Activated CD4-positive, alpha-beta T cell treated with anti-CD3 and anti-CD28 coated beads for 36 hours (primary cell): ENCODE measurements at regions of chr3 and their contacts with region 1.

Region 1: GRCh38 chr3:58090351-58090750 is 82.1 kb downstream of the FLNB start:
- DNase-seq: no peak
- ATAC-seq: no peak
- H3K4me3 Mint-ChIP-seq: no peak overlapping the region
- H3K27ac Mint-ChIP-seq: no peak overlapping the region
- H3K4me1 Mint-ChIP-seq: peaks cover 12% of the 10 kb centered on the region
- H3K27me3 Mint-ChIP-seq: no peaks in the 10 kb centered on the region

Region 2: DNA sequence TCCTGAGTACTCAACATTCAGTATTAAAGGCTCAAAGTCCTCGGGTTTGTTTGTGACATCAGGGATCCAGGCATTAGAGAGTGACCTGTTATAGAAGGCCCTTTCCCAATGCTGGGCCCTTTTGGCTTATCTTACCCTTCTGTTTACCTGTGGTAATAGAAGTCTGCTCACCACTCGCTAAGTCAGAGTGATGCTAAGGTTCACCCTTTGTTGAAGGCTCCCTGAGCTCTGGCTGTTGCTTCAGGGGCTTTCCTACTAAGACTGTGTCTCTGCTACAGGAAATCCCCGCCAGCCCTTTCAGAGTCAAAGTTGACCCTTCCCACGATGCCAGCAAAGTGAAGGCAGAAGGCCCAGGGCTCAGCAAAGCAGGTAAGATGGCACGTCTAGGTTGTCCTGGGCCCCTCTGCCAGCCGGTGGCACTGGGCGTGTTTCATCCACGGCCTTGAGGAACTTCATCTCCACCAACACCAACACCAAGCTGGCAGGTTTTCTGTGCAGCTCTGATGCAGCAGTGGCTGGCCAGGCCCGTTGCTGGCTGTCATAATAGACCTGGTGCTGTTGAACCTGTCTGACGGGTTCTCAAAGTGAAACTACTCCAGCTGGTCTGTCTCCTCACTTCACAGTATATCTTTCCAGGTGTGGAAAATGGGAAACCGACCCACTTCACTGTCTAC is 21.3 kb after region 1 on chr3:
- CTCF ChIA-PET with region 1: no interaction called
- POLR2A ChIA-PET with region 1: no interaction called
- intact Hi-C with region 1: loop called in 1 of 2 experiments (anchors 2 kb)
- DNase-seq: no peak
- ATAC-seq: no peak
- H3K4me3 Mint-ChIP-seq: no peak overlapping the region
- H3K27ac Mint-ChIP-seq: no peak overlapping the region
- H3K4me1 Mint-ChIP-seq: peaks cover 22% of the 10 kb centered on the region
- H3K27me3 Mint-ChIP-seq: no peaks in the 10 kb centered on the region

Region 3: DNA sequence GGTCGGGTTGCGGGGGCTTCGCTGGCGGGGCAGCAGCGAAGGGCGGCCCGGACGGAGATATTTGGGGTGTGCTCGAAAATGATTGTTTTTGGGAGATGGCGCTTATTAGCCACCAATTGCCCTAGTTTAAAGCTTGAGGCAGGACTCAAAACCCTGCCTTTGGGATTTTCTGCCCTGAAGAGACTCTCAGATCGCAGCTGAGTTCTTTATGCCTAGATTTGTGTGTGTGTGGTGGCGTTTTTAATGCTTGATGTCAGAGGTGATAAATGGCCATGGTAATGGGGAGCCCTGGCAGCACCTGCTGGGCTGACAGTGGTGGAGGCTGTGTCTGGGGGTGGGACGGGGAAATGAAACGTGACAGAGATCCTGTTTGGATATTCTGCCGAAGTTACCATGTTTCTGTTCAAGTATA is 402.1 kb after region 1 on chr3:
- CTCF ChIA-PET with region 1: no interaction called
- POLR2A ChIA-PET with region 1: no interaction called
- intact Hi-C with region 1: no loop called
- DNase-seq: peak; percentile 59
- ATAC-seq: peak; percentile 37
- H3K4me3 Mint-ChIP-seq: peak overlapping the region; percentile 84
- H3K27ac Mint-ChIP-seq: peak overlapping the region; percentile 90
- H3K4me1 Mint-ChIP-seq: peaks cover 49% of the 10 kb centered on the region
- H3K27me3 Mint-ChIP-seq: peaks cover 6% of the 10 kb centered on the region